ENCODE measurements at regions of chr7 and their contacts with region 1.

Region 1: DNA sequence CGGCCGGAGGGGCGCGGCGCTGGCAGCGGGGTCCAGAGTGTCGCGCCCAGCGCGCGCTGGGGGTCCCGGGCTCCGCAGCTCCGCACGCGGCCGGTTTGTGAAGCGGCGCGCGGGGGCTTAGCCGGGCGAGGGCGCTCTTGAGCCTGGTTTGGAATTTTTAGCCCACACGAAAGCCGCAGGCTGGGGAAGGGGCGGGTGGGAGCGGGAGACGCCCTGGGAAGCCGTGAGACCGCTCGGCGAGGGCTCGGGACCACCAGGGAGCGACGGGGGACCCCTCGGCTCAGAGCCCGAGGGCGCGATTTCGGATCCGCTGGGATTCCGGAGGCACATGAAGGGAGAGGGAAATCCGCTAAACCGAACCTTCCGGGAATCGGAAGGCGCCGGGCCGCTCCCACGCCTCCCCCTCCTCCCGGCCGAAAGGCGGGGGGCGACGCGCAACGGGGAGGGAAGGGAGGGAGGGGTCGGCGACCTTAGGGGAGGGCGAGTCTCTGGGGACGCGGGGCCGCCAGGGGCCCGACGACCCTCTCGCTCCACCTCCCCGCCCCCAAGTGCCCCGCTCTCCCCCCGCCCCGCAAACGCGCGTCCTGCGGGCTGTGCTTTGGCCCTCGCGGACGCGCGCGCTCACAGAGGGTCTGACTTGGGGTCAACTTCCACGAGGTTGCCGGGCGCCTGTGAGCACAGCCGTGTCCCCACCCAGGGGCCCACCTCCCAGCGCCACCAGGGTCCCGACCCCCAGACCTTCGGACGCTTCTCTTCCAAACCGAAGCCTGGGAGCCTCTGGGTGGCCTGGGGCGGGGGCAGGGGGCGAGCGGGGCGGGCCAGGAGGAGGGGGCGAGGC is 5.1 kb upstream of the ELFN1 start:
- DNase-seq: peak; percentile 60 to 79
- H3K4me3 ChIP-seq: peak overlapping the region; percentile 43
- H3K4me3 Mint-ChIP-seq: no peak overlapping the region
- H3K27ac Mint-ChIP-seq: no peak overlapping the region
- H3K4me1 ChIP-seq: peaks cover 28% of the 10 kb centered on the region
- H3K4me1 Mint-ChIP-seq: peaks cover 7% of the 10 kb centered on the region
- H3K27me3 ChIP-seq: peaks cover 4% of the 10 kb centered on the region
- H3K27me3 Mint-ChIP-seq: peaks cover 18% of the 10 kb centered on the region
- CTCF ChIP-seq: peak; percentile 81 to 92

Region 2: GRCh38 chr7:1638215-1638661 is 26.7 kb before region 1 on chr7:
- CTCF ChIA-PET with region 1: no interaction called
- POLR2A ChIA-PET with region 1: no interaction called
- intact Hi-C with region 1: no loop called
- DNase-seq: no peak
- H3K4me3 ChIP-seq: no peak overlapping the region
- H3K4me3 Mint-ChIP-seq: no peak overlapping the region
- H3K27ac Mint-ChIP-seq: no peak overlapping the region
- H3K4me1 ChIP-seq: no peaks in the 10 kb centered on the region
- H3K4me1 Mint-ChIP-seq: no peaks in the 10 kb centered on the region
- H3K27me3 ChIP-seq: no peaks in the 10 kb centered on the region
- H3K27me3 Mint-ChIP-seq: peaks cover 8% of the 10 kb centered on the region
- CTCF ChIP-seq: no peak

Region 3: DNA sequence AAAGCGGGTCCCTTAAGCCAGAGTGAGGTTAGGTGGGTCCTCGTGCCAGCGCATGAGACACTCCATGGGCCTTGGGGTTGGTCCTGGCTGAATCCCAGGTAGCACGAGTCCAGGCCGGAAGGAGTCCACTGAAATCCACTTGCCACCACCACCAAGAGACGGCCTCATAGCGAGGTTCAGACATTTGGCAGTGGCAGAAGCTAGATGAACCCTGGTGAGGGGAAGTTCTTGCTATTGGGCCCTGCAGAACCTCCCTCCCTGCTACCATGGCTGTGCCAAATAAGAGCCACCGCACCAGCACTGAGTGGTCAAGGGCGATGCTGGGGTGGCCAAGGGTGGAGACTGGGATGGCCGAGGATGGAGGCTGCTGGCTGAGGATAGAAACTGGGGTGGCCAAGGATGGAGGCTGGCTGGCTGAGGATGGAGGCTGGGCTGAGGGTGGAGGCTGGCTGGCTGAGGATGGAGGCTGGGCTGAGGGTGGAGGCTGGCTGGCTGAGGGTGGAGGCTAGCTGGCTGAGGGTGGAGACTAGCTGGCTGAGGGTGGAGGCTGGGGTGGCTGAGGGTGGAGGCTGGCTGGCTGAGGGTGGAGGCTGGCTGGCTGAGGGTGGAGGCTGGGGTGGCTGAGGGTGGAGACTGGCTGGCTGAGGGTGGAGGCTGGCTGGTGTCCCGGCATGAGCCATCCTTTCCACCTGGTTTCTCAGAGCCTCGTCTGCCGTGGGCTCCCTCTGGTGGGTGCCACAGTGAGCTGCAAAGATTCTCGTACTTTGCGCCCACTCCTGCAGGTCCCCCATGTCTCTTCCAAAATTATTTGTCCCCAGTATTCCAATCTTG is 93.3 kb after region 1 on chr7:
- CTCF ChIA-PET with region 1: interaction called, 4 read pairs
- POLR2A ChIA-PET with region 1: no interaction called
- intact Hi-C with region 1: loop called (anchors 1 kb)
- DNase-seq: peak in 1 of 2 experiments; percentile 48
- H3K4me3 ChIP-seq: no peak overlapping the region
- H3K4me3 Mint-ChIP-seq: no peak overlapping the region
- H3K27ac Mint-ChIP-seq: no peak overlapping the region
- H3K4me1 ChIP-seq: peaks cover 7% of the 10 kb centered on the region; the same call in 1 of the 2 replicates
- H3K4me1 Mint-ChIP-seq: no peaks in the 10 kb centered on the region
- H3K27me3 ChIP-seq: no peaks in the 10 kb centered on the region
- H3K27me3 Mint-ChIP-seq: no peaks in the 10 kb centered on the region
- CTCF ChIP-seq: peak; percentile 37 to 77